Heart left ventricle (tissue), 16 donors: ENCODE measurements at regions of chr9 and their contacts with region 1.

Region 1: GRCh38 chr9:136975644-136976043 is 1.7 kb upstream of the PTGDS start:
- DNase-seq: peak; percentile 74 to 86 (median 78)
- ATAC-seq: peak in 3 of 4 donors; percentile 1 to 26 (median 4)
- H3K4me3 ChIP-seq: peak overlapping the region in 3 of 12 donors; percentile 1 to 6 (median 6)
- H3K27ac ChIP-seq: peak overlapping the region in 11 of 12 donors; percentile 47 to 98 (median 89)
- H3K4me1 ChIP-seq: peaks cover 10 to 72% (median 48%) of the 10 kb centered on the region in 12 donors
- H3K27me3 ChIP-seq: peaks cover 0 to 9% (median 0%) of the 10 kb centered on the region in 9 donors
- CTCF ChIP-seq: peak; percentile 12 to 60 (median 38)
- POLR2A ChIP-seq: no peak

Region 2: DNA sequence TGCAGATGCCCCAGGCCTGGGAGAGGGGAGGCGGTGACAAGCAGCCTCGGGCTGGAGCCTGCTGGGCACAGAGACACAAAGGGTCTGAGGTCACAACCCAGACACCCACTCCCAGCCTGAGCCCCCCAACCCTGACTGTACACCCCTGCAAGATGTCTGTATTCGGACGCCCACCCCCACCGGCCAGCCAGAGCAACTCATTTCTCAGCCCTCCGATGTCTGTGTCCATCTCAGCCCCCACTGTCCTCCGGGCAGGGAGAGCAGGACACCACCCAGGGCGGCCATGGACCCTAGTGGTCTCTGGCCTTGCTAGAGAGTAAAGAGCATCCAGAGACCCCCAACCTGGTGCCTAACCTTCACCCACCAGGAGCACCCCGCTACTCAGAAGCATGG is 19.7 kb before region 1 on chr9:
- intact Hi-C with region 1: loop called in 4 of 10 experiments (anchors 1 to 2 kb)
- DNase-seq: peak in 2 of 5 donors; percentile 25 to 58
- ATAC-seq: no peak
- H3K4me3 ChIP-seq: no peak overlapping the region
- H3K27ac ChIP-seq: no peak overlapping the region
- H3K4me1 ChIP-seq: peaks cover 0 to 20% (median 3%) of the 10 kb centered on the region in 12 donors
- H3K27me3 ChIP-seq: no peaks in the 10 kb centered on the region
- CTCF ChIP-seq: no peak
- POLR2A ChIP-seq: no peak